CD4-positive, alpha-beta memory T cell (primary cell): ENCODE measurements at regions of chr17 and their contacts with region 1.

Region 1: GRCh38 chr17:40516581-40517285 is 15.3 kb upstream of the TNS4 start:
- DNase-seq: peak; percentile 84 to 90 (median 87)
- H3K4me3 ChIP-seq: peak overlapping the region; percentile 51 to 70
- H3K4me3 Mint-ChIP-seq: peak overlapping the region; percentile 76 to 91 (median 84)
- H3K27ac ChIP-seq: peak overlapping the region; percentile 32
- H3K27ac Mint-ChIP-seq: peak overlapping the region; percentile 89 to 99 (median 96)
- H3K4me1 ChIP-seq: peaks cover 77% of the 10 kb centered on the region
- H3K4me1 Mint-ChIP-seq: peaks cover 51 to 76% (median 61%) of the 10 kb centered on the region in 4 donors
- H3K27me3 ChIP-seq: no peaks in the 10 kb centered on the region
- H3K27me3 Mint-ChIP-seq: peaks cover 0 to 2% of the 10 kb centered on the region in 2 donors

Region 2: GRCh38 chr17:40542558-40543411 is 26.1 kb after region 1 on chr17:
- CTCF ChIA-PET with region 1: no interaction called
- POLR2A ChIA-PET with region 1: interaction called, 1,088 read pairs
- intact Hi-C with region 1: no loop called
- DNase-seq: peak in 4 of 5 donors; percentile 37 to 82 (median 50)
- H3K4me3 ChIP-seq: no peak overlapping the region
- H3K4me3 Mint-ChIP-seq: peak overlapping the region in 6 of 8 donors; percentile 67 to 94 (median 88)
- H3K27ac ChIP-seq: peak overlapping the region; percentile 69
- H3K27ac Mint-ChIP-seq: peak overlapping the region; percentile 94 to 100 (median 99)
- H3K4me1 ChIP-seq: peaks cover 90% of the 10 kb centered on the region
- H3K4me1 Mint-ChIP-seq: peaks cover 60 to 91% (median 75%) of the 10 kb centered on the region in 4 donors
- H3K27me3 ChIP-seq: no peaks in the 10 kb centered on the region
- H3K27me3 Mint-ChIP-seq: peaks cover 0 to 4% of the 10 kb centered on the region in 2 donors